ENCODE measurements at regions of chr3 and their contacts with region 1.

Region 1: GRCh38 chr3:197749601-197750395 is at the start of gene FYTTD1:
- DNase-seq: peak; percentile 97
- total RNA-seq, gene FYTTD1: 87.5 TPM

Region 2: DNA sequence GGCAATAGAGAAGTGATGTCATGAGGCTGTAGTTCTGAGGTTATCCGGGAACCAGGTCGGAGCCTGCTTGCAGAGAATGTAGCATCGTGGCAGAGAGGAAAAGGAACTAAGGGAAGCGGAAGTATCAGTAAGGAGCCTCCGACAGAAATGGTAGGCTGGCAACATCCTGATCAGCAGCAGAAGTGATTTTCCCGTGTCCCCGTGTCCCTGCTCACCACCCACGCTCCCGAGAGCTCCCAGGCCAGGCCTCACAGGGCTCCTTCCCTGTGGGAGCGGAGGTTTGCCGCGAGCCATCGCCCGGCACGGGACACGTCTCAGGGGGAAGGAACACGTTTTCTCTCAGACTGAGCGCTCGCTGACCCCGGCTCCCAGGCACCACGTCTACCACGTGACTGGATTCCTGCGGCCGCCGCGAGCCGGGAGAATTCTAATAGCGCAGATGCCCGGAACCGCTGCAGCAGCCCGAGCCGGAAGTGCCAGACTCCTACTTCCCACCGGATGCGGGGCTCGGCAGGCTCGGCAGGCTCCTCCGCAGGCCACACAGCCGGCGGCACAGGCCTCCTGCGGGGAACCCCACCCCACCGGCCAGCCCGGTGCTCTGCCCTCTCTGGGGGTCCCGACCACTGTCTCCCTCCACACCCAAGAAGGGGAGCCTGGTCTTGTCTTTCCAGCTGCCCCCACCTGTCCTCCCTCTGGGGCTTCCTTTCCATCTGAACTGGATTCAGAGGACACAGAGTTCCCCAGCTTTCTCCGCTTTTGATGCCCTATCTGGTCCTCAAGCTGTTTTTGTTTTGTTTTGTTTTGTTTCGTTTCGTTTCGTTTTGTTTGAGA is 293.3 kb before region 1 on chr3:
- intact Hi-C with region 1: no loop called
- DNase-seq: peak; percentile 89

Region 3: GRCh38 chr3:197711973-197712707 is 37.7 kb before region 1 on chr3:
- intact Hi-C with region 1: loop called (anchors 2 kb)
- DNase-seq: peak; percentile 92

Region 4: GRCh38 chr3:197736491-197737318 is 13.1 kb before region 1 on chr3 and contains the start of gene RUBCN:
- intact Hi-C with region 1: loop called (anchors 2 kb)
- DNase-seq: peak; percentile 97
- total RNA-seq, gene RUBCN: 41.0 TPM

Region 5: GRCh38 chr3:197791113-197791891 is 41.5 kb after region 1 on chr3 and contains the start of gene LRCH3:
- intact Hi-C with region 1: loop called (anchors 5 kb)
- DNase-seq: peak; percentile 93
- total RNA-seq, gene LRCH3: 27.6 TPM

Measured in cardiac septum (tissue), 1 donor.